Adrenal gland (tissue), 19 donors: ENCODE measurements at regions of chr11 and their contacts with region 1.

Region 1: DNA sequence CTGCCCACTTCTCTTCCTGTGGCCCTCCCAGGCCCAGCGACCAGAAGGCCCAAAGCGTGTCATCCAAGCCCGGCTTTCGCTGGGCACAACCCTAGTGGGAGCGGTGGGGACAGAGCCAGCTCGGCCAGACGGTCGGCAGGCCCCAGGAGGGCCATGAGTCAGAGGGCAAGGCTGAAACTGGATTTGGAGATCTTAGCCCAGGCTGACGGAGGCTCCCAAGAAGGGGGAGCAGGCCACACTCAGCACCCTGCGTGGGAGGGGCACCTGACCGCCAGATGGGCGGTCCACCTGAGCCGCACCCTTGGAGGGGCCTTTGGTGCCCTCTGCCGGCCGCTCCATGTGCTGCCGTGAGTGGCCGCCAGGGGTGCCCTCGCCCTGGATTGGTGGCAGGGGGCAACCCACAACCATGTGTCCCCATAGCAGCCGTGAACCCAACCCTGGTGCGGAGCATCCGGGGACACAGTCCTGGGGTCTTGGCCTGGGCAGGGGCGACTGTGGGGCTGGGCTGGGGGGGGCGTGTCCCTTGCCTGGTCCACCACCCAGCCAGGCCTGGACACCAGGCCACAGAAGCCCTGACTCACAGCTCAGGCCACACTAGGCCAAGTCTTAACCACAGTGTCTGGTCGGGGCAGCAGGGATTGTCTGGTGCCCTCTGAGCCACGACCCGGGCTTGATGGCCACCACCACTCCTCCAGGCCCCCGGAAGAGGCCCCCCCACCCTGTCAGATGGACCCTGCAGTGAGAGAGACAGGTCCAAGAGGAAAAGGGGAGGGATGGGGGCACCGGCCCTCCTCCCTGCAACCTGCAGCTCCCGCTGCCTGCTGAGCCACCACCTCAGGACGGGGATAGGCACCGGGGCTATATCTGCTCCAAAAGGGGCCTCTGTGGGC is 19.2 kb upstream of the TALDO1 start:
- DNase-seq: peak; percentile 85 to 96 (median 92)
- H3K4me3 ChIP-seq: no peak overlapping the region
- H3K27ac ChIP-seq: peak overlapping the region in 4 of 5 donors; percentile 33 to 85 (median 72)
- H3K4me1 ChIP-seq: peaks cover 11 to 26% of the 10 kb centered on the region in 2 donors
- H3K27me3 ChIP-seq: peaks cover 9% of the 10 kb centered on the region
- CTCF ChIP-seq: peak; percentile 93 to 99 (median 97)
- POLR2A ChIP-seq: no peak

Region 2: DNA sequence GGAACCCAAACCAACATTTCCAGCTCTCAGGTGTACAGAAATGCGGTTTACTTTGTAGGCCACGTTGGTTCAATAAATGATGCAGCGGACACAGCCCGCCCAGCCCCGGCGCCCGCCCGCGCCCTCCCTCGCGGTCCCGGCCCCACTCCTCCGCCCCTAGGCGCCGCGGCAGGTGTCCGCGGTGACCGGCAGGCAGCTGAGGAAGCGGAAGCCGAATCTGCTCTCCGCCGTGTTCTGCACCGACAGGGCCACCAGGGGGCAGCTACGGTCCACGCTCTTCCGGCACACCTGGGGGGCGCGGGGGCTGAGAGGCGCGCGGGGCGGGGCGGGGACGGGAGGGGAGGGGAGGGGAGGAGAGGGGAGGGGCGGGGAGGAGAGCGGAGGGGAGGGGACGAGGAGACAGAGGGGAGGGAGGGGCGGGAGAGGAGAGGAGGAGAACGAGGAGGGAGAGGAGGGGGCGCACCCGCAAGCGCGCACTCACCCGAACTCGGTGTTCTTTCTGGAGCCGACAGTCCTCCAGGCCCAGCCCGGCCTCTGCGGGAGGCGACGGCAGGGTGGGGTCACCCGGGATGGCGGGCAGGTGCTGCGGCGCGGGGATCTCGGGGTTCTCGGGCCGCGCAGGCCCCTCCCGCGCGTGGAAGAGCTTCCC is 173.2 kb before region 1 on chr11:
- intact Hi-C with region 1: loop called (anchors 5 to 10 kb)
- DNase-seq: peak in 3 of 7 donors; percentile 52 to 59 (median 57)
- H3K4me3 ChIP-seq: peak overlapping the region in 1 of 4 donors; percentile 41
- H3K27ac ChIP-seq: no peak overlapping the region
- H3K4me1 ChIP-seq: peaks cover 1 to 15% of the 10 kb centered on the region in 2 donors
- H3K27me3 ChIP-seq: peaks cover 24% of the 10 kb centered on the region
- CTCF ChIP-seq: peak in 4 of 6 experiments; percentile 27 to 60 (median 36)
- POLR2A ChIP-seq: no peak

Region 3: DNA sequence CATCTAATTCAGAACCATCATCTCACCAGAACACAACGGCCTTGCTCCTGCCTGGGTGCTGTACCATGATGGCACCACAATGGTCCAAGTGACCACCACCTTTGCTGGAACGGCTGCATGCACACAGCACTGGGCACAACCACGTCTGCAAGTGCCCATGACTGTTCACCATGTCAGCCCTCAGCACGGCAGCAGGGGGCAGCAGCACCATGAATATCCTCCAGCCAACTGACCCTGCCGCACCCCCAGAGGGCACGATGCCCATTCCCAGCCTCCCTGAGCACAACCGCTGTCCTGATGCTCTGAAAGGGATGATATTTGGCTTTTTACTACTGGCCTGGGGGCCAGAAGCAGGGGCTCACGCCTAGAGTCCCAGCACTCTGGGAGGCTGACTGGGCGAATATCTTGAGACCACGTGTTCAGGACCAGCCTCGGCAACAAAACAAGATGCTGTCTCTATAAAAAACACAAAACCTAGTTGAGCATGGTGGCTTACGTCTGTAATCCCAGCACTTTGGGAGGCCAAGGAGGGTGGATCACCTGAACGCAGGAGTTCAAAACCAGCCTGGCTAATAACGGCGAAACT is 65.3 kb before region 1 on chr11:
- intact Hi-C with region 1: loop called (anchors 2 to 5 kb)
- DNase-seq: peak; percentile 56 to 89 (median 74)
- H3K4me3 ChIP-seq: no peak overlapping the region
- H3K27ac ChIP-seq: no peak overlapping the region
- H3K4me1 ChIP-seq: peaks cover 7 to 9% of the 10 kb centered on the region in 2 donors
- H3K27me3 ChIP-seq: no peaks in the 10 kb centered on the region
- CTCF ChIP-seq: peak; percentile 72 to 90 (median 84)
- POLR2A ChIP-seq: no peak

Region 4: GRCh38 chr11:777288-778255 is 49.5 kb after region 1 on chr11 and contains the start of gene GATD1:
- intact Hi-C with region 1: no loop called
- DNase-seq: peak; percentile 88 to 94 (median 93)
- H3K4me3 ChIP-seq: peak within 1 kb of the TSS; percentile 61 to 94 (median 69)
- H3K27ac ChIP-seq: peak within 1 kb of the TSS in 4 of 5 donors; percentile 16 to 89 (median 75)
- H3K4me1 ChIP-seq: peaks cover 36 to 38% of the 10 kb centered on the region in 2 donors
- H3K27me3 ChIP-seq: no peaks in the 10 kb centered on the region
- CTCF ChIP-seq: no peak
- POLR2A ChIP-seq: peak; percentile 77 to 86
- total RNA-seq, gene GATD1: 33.7 to 156 (median 93.4) TPM